K562 (cell line): ENCODE measurements at regions of chr2 and their contacts with region 1.

Region 1: DNA sequence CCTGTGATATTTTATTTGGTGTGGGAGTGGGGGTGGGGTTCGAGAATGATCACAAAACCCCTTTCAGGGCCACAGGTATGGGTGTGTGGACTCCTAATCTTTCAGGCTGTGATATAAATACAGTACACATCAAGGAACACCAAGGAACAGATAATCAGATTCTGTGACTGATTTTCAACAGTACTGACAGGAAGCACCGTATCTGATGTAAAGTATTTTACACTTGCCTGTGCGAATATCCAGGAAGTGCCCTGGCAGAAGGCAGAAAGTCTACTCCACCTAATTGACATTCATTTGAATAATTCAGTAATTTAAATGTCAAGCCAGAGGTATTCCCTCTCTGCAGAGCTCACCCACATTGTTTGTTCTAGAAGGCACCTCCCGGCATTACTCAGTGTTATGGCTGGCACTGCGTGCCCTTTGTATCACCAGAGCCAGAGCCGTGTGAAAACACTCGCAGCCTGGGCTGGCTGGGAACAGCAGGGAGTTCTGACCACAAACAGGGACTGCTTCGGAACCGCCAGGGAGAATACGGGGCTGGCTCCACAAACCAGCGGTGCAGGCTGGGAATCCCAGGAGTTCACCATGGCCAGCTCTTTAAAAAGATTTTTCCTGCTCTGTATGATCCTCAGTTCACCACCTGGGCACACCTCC is 91.8 kb downstream of the ACVR1 start:
- DNase-seq: peak in 2 of 4 experiments; percentile 24 to 29
- ATAC-seq: no peak
- H3K4me3 ChIP-seq: no peak overlapping the region
- H3K27ac ChIP-seq: peak overlapping the region; percentile 37; the same call in 2 of the 3 replicates
- H3K4me1 ChIP-seq: peaks cover 22 to 66% of the 10 kb centered on the region in 2 experiments
- H3K27me3 ChIP-seq: no peaks in the 10 kb centered on the region
- CTCF ChIP-seq: no peak
- EP300 ChIP-seq: peak; percentile 76
- POLR2A ChIP-seq: no peak
- RAD21 ChIP-seq: 0 out of 4 replicates have a peak, but pooled peaks of 1 of the 2 experiments have one; percentile 3

Region 2: DNA sequence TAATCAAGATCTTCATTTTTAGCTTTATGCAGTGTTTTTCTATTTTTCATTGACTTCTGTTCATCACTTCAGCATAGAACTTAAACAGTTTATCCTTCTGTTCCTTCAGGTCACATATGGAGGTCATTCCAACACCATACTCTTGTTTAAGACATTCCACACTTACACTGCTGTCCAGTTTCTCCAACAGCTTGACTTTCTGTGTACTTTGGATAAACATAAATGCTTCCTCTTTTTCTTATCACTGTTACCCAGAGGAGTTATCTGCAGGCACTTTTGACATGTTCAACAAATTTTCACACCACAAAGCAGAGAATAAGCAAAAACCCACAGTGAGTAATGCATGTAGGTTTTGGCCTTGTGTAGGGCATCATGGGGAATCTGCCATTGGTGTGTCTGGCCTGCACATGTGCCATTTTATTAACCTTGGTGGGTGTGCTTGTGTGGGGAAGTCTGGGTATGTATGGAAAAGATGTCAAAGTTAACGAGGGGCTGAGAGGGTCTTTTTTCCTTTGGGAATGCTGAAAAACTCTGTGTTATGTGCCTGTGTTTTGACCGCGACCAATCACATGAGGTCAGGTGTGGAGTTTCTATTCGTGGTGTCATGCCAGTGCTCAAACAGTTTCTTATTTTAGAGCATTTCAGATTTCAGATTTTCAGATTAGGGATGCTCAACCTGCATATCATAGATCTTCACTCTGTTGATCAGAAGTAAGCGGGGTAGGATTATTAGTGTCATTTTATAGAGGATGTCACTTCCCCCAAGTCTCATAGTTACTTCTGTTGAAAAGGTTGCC is 145.8 kb after region 1 on chr2:
- CTCF ChIA-PET with region 1: no interaction called
- POLR2A ChIA-PET with region 1: no interaction called
- in situ Hi-C with region 1: no loop called
- intact Hi-C with region 1: loop called (anchors 1 kb)
- DNase-seq: peak; percentile 41 to 93 (median 58)
- ATAC-seq: peak; percentile 93
- H3K4me3 ChIP-seq: no peak overlapping the region
- H3K27ac ChIP-seq: peak overlapping the region; percentile 80
- H3K4me1 ChIP-seq: peaks cover 10 to 82% of the 10 kb centered on the region in 2 experiments
- H3K27me3 ChIP-seq: no peaks in the 10 kb centered on the region
- CTCF ChIP-seq: no peak; a peak in 1 of 6 replicates
- EP300 ChIP-seq: peak; percentile 100
- POLR2A ChIP-seq: no peak
- RAD21 ChIP-seq: peak; percentile 44 to 54; a peak in 3 of 4 replicates

Region 3: GRCh38 chr2:158142568-158143332 is 358.5 kb after region 1 on chr2:
- CTCF ChIA-PET with region 1: no interaction called
- POLR2A ChIA-PET with region 1: no interaction called
- in situ Hi-C with region 1: no loop called
- intact Hi-C with region 1: no loop called
- DNase-seq: peak in 2 of 4 experiments; percentile 13 to 54
- ATAC-seq: peak; percentile 63; the same call in 2 of the 3 replicates
- H3K4me3 ChIP-seq: no peak overlapping the region
- H3K27ac ChIP-seq: no peak overlapping the region
- H3K4me1 ChIP-seq: peaks cover 0 to 4% of the 10 kb centered on the region in 2 experiments; a peak in 3 of 5 replicates
- H3K27me3 ChIP-seq: no peaks in the 10 kb centered on the region; a peak in 2 of 5 replicates
- CTCF ChIP-seq: no peak
- EP300 ChIP-seq: no peak
- POLR2A ChIP-seq: no peak
- RAD21 ChIP-seq: 0 out of 4 replicates have a peak, but pooled peaks of 1 of the 2 experiments have one; percentile 13